ENCODE measurements at regions of chr20 and their contacts with region 1.

Region 1: GRCh38 chr20:35192111-35192872 is 20.4 kb downstream of the PROCR start:
- DNase-seq: no peak
- H3K4me3 ChIP-seq: no peak overlapping the region
- H3K27ac ChIP-seq: no peak overlapping the region
- H3K4me1 ChIP-seq: no peaks in the 10 kb centered on the region
- H3K27me3 ChIP-seq: no peaks in the 10 kb centered on the region
- CTCF ChIP-seq: no peak

Region 2: DNA sequence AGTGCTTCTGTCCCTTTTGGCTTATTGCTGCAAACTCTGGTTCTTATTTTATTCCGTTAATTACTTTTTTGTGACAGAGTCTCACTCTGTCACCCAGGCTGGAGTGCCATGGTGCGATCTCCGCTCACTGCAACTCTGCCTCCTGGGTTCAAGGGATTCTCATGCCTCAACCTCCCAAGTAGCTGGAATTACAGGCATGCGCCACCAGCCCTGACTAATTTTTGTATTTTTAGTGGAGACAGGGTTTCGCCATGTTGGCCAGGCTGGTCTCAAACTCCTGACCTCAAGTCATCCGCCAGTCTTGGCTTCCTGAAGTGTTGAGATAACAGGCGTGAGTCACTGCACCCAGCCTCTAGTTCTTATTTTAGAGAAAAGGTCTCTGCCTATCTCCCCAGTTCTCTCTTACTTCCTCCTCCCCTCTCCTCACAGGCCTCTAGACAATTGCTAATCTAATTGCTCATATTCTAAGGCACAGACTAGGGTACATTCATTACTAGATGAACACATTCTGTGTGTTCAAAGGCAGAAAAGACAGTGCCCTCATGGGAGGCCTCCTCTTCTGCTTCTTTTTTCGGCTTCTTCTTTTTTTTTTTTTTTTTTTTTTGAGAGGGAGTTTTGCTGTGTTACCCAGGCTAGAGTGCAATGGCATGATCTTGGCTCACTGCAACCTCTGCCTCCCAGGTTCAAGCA is 72.1 kb before region 1 on chr20:
- intact Hi-C with region 1: no loop called
- DNase-seq: peak; percentile 47 to 78
- H3K4me3 ChIP-seq: no peak overlapping the region
- H3K27ac ChIP-seq: peak overlapping the region in 1 of 2 donors; percentile 58
- H3K4me1 ChIP-seq: peaks cover 0 to 14% (median 0%) of the 10 kb centered on the region in 4 donors
- H3K27me3 ChIP-seq: no peaks in the 10 kb centered on the region
- CTCF ChIP-seq: no peak

Region 3: GRCh38 chr20:35232575-35232974 is 40.3 kb after region 1 on chr20:
- intact Hi-C with region 1: no loop called
- DNase-seq: no peak
- H3K4me3 ChIP-seq: no peak overlapping the region
- H3K27ac ChIP-seq: no peak overlapping the region
- H3K4me1 ChIP-seq: no peaks in the 10 kb centered on the region
- H3K27me3 ChIP-seq: no peaks in the 10 kb centered on the region
- CTCF ChIP-seq: no peak

Region 4: DNA sequence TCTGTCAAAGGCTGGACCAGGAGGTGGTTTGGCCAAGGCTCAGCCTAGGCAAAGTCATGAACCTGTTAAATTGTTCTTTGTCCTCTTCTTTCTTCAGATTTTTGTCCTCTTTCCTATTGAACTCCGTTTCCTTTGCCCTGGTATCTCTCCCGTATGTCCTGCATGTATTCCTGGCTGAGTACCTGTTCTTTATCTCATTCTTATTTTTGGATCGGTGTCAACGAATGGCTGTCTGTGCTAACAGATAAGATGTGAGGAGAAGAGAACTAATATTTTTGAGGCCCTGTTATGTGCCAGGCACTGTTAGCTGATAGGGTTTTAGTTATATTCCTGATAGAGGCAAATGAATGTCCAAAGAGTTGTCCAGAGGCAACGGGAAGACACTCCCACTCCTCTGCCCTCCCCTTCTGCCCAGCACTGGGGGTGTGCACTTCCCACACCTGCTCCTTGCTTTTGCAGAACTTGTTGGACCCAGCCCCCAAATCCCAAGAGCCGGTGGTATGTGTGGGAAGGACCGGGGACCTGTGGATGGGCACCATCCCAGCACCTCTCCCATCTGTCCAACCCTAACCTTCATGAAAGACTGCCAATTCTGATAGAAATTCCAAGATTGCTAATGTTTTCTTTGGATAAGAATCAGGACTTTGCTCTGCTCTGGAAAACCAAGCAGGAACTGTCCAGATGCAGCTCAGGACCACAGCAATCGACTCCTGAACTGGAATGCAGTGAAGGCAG is 65.0 kb after region 1 on chr20:
- intact Hi-C with region 1: no loop called
- DNase-seq: no peak
- H3K4me3 ChIP-seq: no peak overlapping the region
- H3K27ac ChIP-seq: no peak overlapping the region
- H3K4me1 ChIP-seq: peaks cover 0 to 13% (median 2%) of the 10 kb centered on the region in 4 donors
- H3K27me3 ChIP-seq: no peaks in the 10 kb centered on the region
- CTCF ChIP-seq: no peak

Region 5: DNA sequence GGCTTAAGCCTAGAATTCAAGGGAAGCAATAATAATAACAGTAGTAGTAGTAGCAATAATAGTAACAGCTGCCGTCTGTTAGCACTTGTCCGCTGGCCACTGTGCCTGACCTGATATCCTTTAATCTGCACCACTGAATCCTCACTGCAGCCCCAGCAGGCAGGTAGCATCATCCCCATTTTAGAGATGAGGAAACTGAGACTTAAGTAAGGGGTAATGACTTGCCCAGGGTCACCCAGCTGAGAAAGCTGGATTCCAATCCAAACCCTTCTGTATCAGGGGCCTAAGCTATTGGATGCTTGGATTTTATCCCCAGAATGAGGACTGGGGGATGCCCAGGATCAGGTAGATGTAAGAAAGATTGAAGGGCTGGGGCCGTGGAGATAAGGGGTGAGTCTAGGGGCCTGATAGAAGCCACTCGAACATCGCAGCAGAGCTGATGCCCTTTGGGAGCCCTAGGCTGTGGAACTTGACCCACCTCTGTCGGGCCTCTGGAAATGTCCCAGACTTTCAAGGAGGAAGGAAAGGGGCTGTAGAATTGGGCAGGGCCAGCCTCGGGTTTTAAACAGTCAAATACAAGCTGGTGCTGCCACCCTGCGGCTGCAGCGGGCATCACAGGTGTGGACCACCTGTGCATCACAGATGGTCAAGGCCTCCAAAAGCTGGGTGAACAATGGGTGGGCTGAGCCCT is 1246.9 kb after region 1 on chr20:
- intact Hi-C with region 1: loop called (anchors 5 kb)
- DNase-seq: peak; percentile 57 to 76
- H3K4me3 ChIP-seq: no peak overlapping the region
- H3K27ac ChIP-seq: no peak overlapping the region
- H3K4me1 ChIP-seq: peaks cover 0 to 10% (median 6%) of the 10 kb centered on the region in 4 donors
- H3K27me3 ChIP-seq: peaks cover 0 to 36% of the 10 kb centered on the region in 2 donors
- CTCF ChIP-seq: peak; percentile 74 to 87

Measured in tibial artery (tissue), 4 donors.